ENCODE measurements at regions of chrX and their contacts with region 1.

Region 1: DNA sequence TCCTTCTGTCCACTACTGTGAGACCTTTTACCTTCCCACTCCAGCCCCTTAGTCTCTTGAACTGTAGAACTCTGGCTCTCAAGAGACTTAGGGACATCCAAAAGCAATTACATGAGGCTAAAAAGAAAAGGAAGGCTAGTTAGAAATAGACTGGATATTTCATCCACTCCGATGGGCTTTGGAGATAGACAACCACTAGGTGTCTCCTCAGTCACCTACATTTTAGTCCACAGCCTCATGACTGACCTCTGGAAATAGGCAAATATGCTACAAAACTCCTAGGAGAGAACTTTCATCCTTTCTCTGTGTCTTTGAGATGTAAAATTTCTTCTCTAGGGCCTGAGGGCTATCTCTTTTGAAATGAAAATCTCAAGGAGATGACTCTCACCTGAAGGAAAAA is 45.1 kb upstream of the LAMP2 start:
- DNase-seq: no peak
- H3K4me3 ChIP-seq: no peak overlapping the region
- H3K27ac ChIP-seq: no peak overlapping the region
- H3K4me1 ChIP-seq: no peaks in the 10 kb centered on the region
- H3K27me3 ChIP-seq: no peaks in the 10 kb centered on the region
- CTCF ChIP-seq: peak in 3 of 5 experiments; percentile 20 to 35 (median 23)
- EP300 ChIP-seq: no peak
- POLR2A ChIP-seq: no peak

Region 2: GRCh38 chrX:120372667-120373370 is 141.4 kb before region 1 on chrX:
- in situ Hi-C with region 1: no loop called
- intact Hi-C with region 1: no loop called
- DNase-seq: no peak
- H3K4me3 ChIP-seq: no peak overlapping the region
- H3K27ac ChIP-seq: no peak overlapping the region
- H3K4me1 ChIP-seq: no peaks in the 10 kb centered on the region
- H3K27me3 ChIP-seq: no peaks in the 10 kb centered on the region
- CTCF ChIP-seq: no peak
- EP300 ChIP-seq: no peak
- POLR2A ChIP-seq: no peak

Region 3: GRCh38 chrX:120575379-120576114 is 61.3 kb after region 1 on chrX:
- in situ Hi-C with region 1: no loop called
- intact Hi-C with region 1: no loop called
- DNase-seq: no peak
- H3K4me3 ChIP-seq: no peak overlapping the region
- H3K27ac ChIP-seq: no peak overlapping the region
- H3K4me1 ChIP-seq: no peaks in the 10 kb centered on the region
- H3K27me3 ChIP-seq: no peaks in the 10 kb centered on the region
- CTCF ChIP-seq: no peak
- EP300 ChIP-seq: no peak
- POLR2A ChIP-seq: no peak

Region 4: DNA sequence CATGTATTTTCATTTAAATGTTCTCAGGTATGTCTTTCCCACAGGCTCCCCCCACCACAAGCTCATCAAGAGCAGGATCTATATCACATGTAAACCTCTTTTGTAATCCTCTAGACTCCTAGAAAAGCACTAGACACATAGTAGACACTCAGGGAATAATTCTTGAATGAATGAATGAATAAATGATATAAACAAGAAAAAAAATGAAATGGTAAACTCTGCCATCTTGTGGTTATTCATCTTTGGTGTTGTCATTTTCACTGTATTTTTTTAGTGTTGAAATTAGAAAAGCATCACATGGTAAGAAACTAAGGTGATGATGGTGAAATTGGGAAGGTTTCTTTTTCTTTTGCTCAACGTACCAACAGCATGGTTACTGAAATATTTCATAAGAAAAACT is 149.8 kb after region 1 on chrX:
- in situ Hi-C with region 1: loop called in 3 of 4 experiments (anchors 10 to 25 kb)
- intact Hi-C with region 1: no loop called
- DNase-seq: no peak
- H3K4me3 ChIP-seq: no peak overlapping the region
- H3K27ac ChIP-seq: no peak overlapping the region
- H3K4me1 ChIP-seq: no peaks in the 10 kb centered on the region
- H3K27me3 ChIP-seq: no peaks in the 10 kb centered on the region
- CTCF ChIP-seq: peak; percentile 10 to 39 (median 25)
- EP300 ChIP-seq: no peak
- POLR2A ChIP-seq: no peak

Region 5: GRCh38 chrX:120769576-120770341 is 255.5 kb after region 1 on chrX:
- in situ Hi-C with region 1: loop called in 2 of 4 experiments (anchors 25 kb)
- intact Hi-C with region 1: no loop called
- DNase-seq: no peak
- H3K4me3 ChIP-seq: no peak overlapping the region
- H3K27ac ChIP-seq: no peak overlapping the region
- H3K4me1 ChIP-seq: no peaks in the 10 kb centered on the region
- H3K27me3 ChIP-seq: no peaks in the 10 kb centered on the region
- CTCF ChIP-seq: peak in 2 of 5 experiments; percentile 16 to 19
- EP300 ChIP-seq: no peak
- POLR2A ChIP-seq: no peak

Region 6: DNA sequence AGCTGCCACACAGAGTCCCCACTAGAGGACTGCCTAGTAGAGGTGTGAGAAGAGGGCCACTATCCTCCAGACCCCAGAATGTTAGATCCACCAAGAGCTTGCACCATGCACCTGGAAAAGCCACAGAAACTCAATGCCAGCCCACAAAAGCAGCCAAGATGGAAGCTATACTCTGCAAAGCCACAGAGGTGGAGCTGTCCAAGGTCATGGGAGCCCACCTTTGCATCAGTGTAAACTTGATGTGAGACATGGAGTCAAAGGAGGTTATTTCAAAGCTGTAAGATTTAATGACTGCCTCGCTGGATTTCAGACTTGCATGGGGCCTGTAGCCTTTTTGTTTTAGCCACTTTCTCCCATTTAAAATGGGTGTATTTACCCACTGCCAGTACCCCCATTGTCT is 1639.8 kb after region 1 on chrX:
- in situ Hi-C with region 1: no loop called
- intact Hi-C with region 1: loop called (anchors 5 kb)
- DNase-seq: no peak
- H3K4me3 ChIP-seq: no peak overlapping the region
- H3K27ac ChIP-seq: no peak overlapping the region
- H3K4me1 ChIP-seq: no peaks in the 10 kb centered on the region
- H3K27me3 ChIP-seq: no peaks in the 10 kb centered on the region
- CTCF ChIP-seq: no peak
- EP300 ChIP-seq: no peak
- POLR2A ChIP-seq: no peak

Measured in transverse colon (tissue), 4 donors.